ENCODE measurements at regions of chr16 and their contacts with region 1.

Region 1: GRCh38 chr16:13873835-13874438 is 46.0 kb upstream of the ERCC4 start:
- DNase-seq: peak; percentile 30
- H3K4me3 Mint-ChIP-seq: no peak overlapping the region
- H3K27ac Mint-ChIP-seq: no peak overlapping the region
- H3K4me1 Mint-ChIP-seq: no peaks in the 10 kb centered on the region
- H3K27me3 Mint-ChIP-seq: peaks cover 21% of the 10 kb centered on the region
- CTCF ChIP-seq: peak; percentile 41

Region 2: GRCh38 chr16:13767215-13767614 is 106.7 kb before region 1 on chr16:
- CTCF ChIA-PET with region 1: no interaction called
- POLR2A ChIA-PET with region 1: no interaction called
- intact Hi-C with region 1: no loop called
- DNase-seq: peak; percentile 24
- H3K4me3 Mint-ChIP-seq: no peak overlapping the region
- H3K27ac Mint-ChIP-seq: no peak overlapping the region
- H3K4me1 Mint-ChIP-seq: no peaks in the 10 kb centered on the region
- H3K27me3 Mint-ChIP-seq: peaks cover 38% of the 10 kb centered on the region
- CTCF ChIP-seq: no peak

Region 3: GRCh38 chr16:13833510-13833909 is 40.4 kb before region 1 on chr16:
- CTCF ChIA-PET with region 1: no interaction called
- POLR2A ChIA-PET with region 1: no interaction called
- intact Hi-C with region 1: no loop called
- DNase-seq: no peak
- H3K4me3 Mint-ChIP-seq: no peak overlapping the region
- H3K27ac Mint-ChIP-seq: no peak overlapping the region
- H3K4me1 Mint-ChIP-seq: no peaks in the 10 kb centered on the region
- H3K27me3 Mint-ChIP-seq: peaks cover 25% of the 10 kb centered on the region
- CTCF ChIP-seq: no peak

Region 4: DNA sequence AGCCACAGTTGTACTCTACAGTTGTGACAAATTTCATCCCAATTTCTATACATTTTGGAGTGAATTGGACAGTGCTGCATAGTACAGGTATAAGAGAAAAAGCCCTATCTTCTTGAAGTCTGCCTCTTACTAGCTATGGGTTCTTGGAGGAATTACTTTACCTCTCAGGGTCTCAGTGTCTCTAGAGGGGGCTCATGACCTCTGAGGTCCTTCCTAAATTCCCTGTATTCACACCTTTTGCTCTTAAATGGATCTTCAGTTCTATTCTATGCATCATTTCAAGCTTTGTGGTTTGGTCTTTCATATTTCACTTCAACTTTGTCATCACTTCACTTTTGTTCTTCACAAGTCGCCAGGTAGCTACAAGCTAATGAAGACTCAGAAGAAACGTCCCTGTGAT is 25.1 kb before region 1 on chr16:
- CTCF ChIA-PET with region 1: no interaction called
- POLR2A ChIA-PET with region 1: no interaction called
- intact Hi-C with region 1: no loop called
- DNase-seq: no peak
- H3K4me3 Mint-ChIP-seq: no peak overlapping the region
- H3K27ac Mint-ChIP-seq: no peak overlapping the region
- H3K4me1 Mint-ChIP-seq: no peaks in the 10 kb centered on the region
- H3K27me3 Mint-ChIP-seq: peaks cover 20% of the 10 kb centered on the region
- CTCF ChIP-seq: no peak

Region 5: DNA sequence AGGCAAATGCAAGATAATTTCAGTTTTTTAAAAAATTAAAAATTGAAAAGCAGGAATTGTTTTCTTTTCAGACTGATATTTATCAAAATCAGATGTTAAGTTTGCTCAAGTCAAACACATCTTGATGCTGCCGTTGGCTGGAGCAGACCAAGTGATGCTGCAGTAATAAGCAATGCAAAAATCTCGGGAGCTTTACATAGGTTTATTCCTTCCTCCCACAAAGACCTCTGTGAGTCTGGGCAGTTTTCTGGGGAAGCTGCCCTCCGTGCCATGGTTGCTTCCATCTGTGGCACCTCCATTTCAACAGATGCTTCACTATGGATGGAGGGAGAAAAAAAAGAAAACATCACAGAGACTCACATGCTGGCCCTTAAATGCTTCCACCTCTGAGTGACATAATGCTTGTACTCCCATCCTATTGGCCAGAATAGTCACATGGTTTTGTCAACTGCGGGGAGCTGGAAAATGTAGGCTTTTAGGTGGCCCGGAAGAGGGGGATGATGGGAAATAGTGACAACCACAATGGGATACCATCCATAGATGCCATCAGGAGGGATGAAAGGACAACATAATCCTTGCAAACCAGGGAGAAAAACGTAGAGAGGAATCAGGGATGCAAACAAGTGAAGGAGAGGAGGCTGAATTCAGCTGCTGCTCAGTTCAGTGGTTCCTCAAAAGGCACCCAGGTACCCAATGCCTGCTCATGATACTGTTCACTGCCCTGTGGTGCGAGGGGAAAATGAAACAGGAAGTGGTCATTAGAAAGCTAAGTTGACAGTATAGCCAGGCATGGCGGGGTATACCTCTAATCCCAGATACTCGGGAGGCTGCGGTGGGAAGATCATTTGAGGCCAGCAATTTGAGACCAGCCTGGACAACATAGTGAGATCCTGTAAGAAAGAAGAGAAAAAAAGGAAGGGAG is 32.5 kb after region 1 on chr16:
- CTCF ChIA-PET with region 1: interaction called, 10 read pairs
- POLR2A ChIA-PET with region 1: no interaction called
- intact Hi-C with region 1: loop called (anchors 10 kb)
- DNase-seq: no peak
- H3K4me3 Mint-ChIP-seq: no peak overlapping the region
- H3K27ac Mint-ChIP-seq: no peak overlapping the region
- H3K4me1 Mint-ChIP-seq: peaks cover 8% of the 10 kb centered on the region
- H3K27me3 Mint-ChIP-seq: peaks cover 7% of the 10 kb centered on the region
- CTCF ChIP-seq: no peak